ENCODE measurements at regions of chr11 and their contacts with region 1.

Region 1: DNA sequence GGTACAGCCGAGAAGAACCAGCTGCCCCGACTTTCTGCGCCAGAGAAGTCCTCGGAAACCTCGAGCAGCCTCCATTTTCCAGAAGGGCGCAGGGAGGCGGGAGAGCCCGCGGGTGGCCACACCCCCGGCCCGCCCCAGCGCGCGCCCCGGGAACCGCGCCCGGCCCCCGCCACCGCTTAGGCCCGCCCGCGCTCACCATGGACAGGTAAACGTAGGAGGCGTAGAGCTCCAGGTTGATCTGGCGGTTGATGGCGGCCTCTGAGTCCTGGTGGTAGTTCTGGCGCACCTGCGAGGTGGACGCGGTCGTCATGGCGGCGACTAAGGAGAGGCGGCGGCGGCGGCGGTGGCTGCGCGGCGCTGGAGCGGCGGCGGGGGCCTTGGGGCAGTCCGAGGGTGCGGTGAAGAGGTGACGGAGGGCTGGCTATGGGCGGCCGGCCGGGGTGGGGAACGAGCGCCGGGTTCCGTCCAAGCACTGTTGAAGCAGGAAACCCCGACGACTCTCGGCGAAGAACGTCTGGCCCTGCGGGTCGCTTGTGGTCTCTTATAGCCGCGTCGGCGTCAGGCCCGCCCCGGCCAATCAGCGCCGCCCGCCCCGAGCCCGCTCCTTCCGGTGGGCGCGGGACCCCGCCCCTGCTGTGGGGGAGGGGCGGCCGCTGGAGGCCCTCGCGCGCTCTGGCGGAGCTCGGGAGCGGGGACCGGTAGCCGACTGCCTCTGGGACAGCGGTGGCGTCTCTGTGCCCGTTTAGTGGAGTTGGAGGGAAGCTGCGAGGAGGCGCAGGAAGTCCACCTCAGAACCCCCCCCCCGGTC is at the start of gene FTH1:
- DNase-seq: peak; percentile 82 to 95 (median 91)
- ATAC-seq: peak; percentile 74
- H3K4me3 ChIP-seq: peak within 1 kb of the TSS; percentile 98 to 100
- H3K4me3 Mint-ChIP-seq: peak within 1 kb of the TSS; percentile 96
- H3K27ac ChIP-seq: peak within 1 kb of the TSS; percentile 72 to 96
- H3K27ac Mint-ChIP-seq: peak within 1 kb of the TSS; percentile 98
- H3K4me1 ChIP-seq: peaks cover 43% of the 10 kb centered on the region
- H3K4me1 Mint-ChIP-seq: peaks cover 59% of the 10 kb centered on the region
- H3K27me3 ChIP-seq: no peaks in the 10 kb centered on the region
- H3K27me3 Mint-ChIP-seq: no peaks in the 10 kb centered on the region
- CTCF ChIP-seq: no peak
- total RNA-seq, gene FTH1: 2,788 to 2,859 TPM

Region 2: DNA sequence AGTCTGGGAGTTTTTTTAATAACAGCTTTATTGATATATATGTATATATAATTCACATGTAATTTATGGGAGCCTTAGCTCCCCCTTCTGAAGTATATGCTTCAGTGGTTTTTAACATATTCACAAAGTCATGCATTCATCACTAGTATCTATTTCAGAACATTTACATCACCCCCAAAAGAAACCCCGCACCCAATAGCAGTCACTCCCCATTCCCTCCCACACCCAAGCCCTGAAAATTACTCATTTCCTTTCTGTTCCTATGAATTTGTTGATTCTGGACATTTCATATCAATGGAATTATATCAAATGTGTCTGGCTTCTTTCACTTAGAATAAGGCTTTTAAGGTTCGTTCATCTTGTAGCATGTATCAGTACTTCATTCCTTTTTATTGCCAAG is 350.9 kb before region 1 on chr11:
- CTCF ChIA-PET with region 1: no interaction called
- POLR2A ChIA-PET with region 1: no interaction called
- intact Hi-C with region 1: no loop called
- DNase-seq: no peak
- ATAC-seq: no peak
- H3K4me3 ChIP-seq: no peak overlapping the region
- H3K4me3 Mint-ChIP-seq: no peak overlapping the region
- H3K27ac ChIP-seq: no peak overlapping the region
- H3K27ac Mint-ChIP-seq: no peak overlapping the region
- H3K4me1 ChIP-seq: no peaks in the 10 kb centered on the region
- H3K4me1 Mint-ChIP-seq: no peaks in the 10 kb centered on the region
- H3K27me3 ChIP-seq: no peaks in the 10 kb centered on the region
- H3K27me3 Mint-ChIP-seq: peaks cover 35% of the 10 kb centered on the region
- CTCF ChIP-seq: no peak

Region 3: DNA sequence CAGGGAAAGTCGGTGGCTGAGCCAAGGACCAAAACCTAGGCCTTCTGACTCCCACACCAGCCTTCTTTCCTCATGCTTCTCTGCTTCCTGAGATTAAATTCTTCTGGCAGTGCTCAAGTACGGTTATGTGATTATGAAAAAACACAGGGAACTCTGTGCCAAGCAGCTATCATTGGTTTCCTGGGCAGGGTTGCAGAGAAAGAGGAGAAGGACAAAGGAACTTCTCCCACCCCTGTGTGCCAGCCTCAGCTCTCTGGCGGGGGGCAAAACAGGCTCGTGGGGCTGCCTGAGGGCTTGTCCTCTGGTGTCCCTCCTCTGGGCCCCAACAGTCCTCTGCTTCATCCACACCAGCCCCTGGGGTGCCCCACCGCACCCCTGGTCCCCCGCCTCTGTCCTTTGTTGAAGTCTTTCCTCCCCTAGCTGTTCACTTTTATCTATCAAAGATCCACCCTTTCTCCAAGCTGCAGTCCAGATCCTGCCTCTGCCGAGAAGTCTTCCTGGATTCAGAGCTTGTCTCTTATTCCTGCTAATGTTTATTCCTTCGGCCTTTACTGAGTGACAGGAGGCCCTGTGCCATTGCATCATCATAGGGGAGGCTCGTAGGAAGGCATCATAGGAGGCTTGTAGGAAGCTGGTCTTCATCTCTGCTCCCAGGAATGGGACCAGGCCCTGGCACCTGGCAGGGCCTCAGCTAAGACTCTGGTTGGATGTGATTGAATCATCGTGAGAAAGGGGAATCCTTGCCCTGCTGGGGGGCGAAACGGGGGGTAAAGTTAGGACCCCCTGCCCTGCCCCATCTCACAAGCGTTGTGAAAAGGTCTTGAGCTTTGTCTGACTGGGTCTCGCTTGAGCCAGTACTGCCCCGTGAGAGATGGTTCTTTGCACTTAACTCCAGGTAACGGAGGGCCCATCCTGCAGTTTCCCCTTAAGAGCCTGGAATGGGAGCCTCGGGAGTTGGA is 11.7 kb after region 1 on chr11:
- CTCF ChIA-PET with region 1: no interaction called
- POLR2A ChIA-PET with region 1: interaction called, 20 read pairs
- intact Hi-C with region 1: no loop called
- DNase-seq: peak in 1 of 9 experiments; percentile 42
- ATAC-seq: no peak
- H3K4me3 ChIP-seq: no peak overlapping the region
- H3K4me3 Mint-ChIP-seq: no peak overlapping the region
- H3K27ac ChIP-seq: no peak overlapping the region
- H3K27ac Mint-ChIP-seq: no peak overlapping the region
- H3K4me1 ChIP-seq: no peaks in the 10 kb centered on the region
- H3K4me1 Mint-ChIP-seq: no peaks in the 10 kb centered on the region
- H3K27me3 ChIP-seq: no peaks in the 10 kb centered on the region
- H3K27me3 Mint-ChIP-seq: no peaks in the 10 kb centered on the region
- CTCF ChIP-seq: no peak

Region 4: DNA sequence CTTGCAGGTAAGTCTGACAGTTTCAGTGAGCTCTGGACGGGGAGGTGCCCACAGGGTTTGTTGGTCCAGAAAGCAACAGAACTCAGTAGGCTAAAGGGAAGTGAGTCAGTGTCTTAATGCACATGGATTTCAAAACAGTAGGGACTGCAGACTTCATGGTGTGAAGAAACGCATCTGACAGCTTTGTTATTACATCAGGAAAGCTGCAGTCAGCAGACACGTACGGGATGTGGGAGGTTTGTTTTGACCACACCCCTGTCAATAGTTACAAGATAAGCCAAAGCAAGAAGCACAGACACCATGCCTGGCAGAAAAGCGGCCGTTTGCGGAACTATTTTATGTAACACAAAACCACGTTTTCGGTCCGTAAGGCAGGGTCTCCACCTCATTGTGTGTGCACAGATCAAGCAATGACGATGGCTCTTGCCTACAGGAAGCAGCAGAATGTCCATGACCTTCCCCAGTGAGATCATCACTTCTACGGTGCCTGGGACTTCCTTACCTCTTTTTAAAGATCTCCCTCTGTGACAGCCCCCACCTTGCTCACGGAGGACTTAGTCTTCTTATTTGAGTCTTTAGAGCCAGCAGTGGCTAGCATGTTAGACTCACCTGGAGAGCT is 58.3 kb after region 1 on chr11:
- CTCF ChIA-PET with region 1: no interaction called
- POLR2A ChIA-PET with region 1: interaction called, 35 read pairs
- intact Hi-C with region 1: loop called (anchors 1 kb)
- DNase-seq: peak; percentile 41 to 97 (median 77)
- ATAC-seq: peak; percentile 87
- H3K4me3 ChIP-seq: peak overlapping the region in 1 of 2 experiments; percentile 24
- H3K4me3 Mint-ChIP-seq: peak overlapping the region; percentile 44
- H3K27ac ChIP-seq: peak overlapping the region; percentile 78 to 91
- H3K27ac Mint-ChIP-seq: peak overlapping the region; percentile 95
- H3K4me1 ChIP-seq: peaks cover 15% of the 10 kb centered on the region
- H3K4me1 Mint-ChIP-seq: peaks cover 20% of the 10 kb centered on the region
- H3K27me3 ChIP-seq: no peaks in the 10 kb centered on the region
- H3K27me3 Mint-ChIP-seq: no peaks in the 10 kb centered on the region
- CTCF ChIP-seq: no peak

Region 5: GRCh38 chr11:62048065-62048464 is 80.7 kb after region 1 on chr11:
- CTCF ChIA-PET with region 1: no interaction called
- POLR2A ChIA-PET with region 1: no interaction called
- intact Hi-C with region 1: no loop called
- DNase-seq: no peak
- ATAC-seq: no peak
- H3K4me3 ChIP-seq: no peak overlapping the region
- H3K4me3 Mint-ChIP-seq: no peak overlapping the region
- H3K27ac ChIP-seq: no peak overlapping the region
- H3K27ac Mint-ChIP-seq: no peak overlapping the region
- H3K4me1 ChIP-seq: no peaks in the 10 kb centered on the region
- H3K4me1 Mint-ChIP-seq: no peaks in the 10 kb centered on the region
- H3K27me3 ChIP-seq: no peaks in the 10 kb centered on the region
- H3K27me3 Mint-ChIP-seq: peaks cover 4% of the 10 kb centered on the region
- CTCF ChIP-seq: no peak

Region 6: DNA sequence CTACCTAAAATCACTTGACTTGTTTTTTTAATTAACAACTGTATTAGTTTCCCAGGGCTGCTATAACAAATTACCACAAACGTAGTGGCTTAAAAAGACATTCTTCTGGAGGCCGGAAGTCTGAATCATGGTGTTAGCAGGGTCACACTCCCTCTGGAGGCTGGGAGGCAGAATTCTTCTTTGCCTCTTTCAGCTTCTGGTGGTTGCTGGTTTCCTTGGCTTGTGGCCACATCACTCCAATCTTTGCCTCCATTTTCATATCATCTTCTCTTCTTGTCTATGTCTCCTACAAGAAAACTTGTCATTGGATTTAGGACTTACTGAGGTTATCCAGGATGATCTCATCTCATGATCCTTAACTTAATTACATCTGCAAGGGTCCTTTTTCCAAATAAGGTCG is 149.1 kb after region 1 on chr11:
- CTCF ChIA-PET with region 1: no interaction called
- POLR2A ChIA-PET with region 1: no interaction called
- intact Hi-C with region 1: no loop called
- DNase-seq: no peak
- ATAC-seq: no peak
- H3K4me3 ChIP-seq: no peak overlapping the region
- H3K4me3 Mint-ChIP-seq: no peak overlapping the region
- H3K27ac ChIP-seq: no peak overlapping the region
- H3K27ac Mint-ChIP-seq: no peak overlapping the region
- H3K4me1 ChIP-seq: peaks cover 6% of the 10 kb centered on the region
- H3K4me1 Mint-ChIP-seq: peaks cover 2% of the 10 kb centered on the region
- H3K27me3 ChIP-seq: no peaks in the 10 kb centered on the region
- H3K27me3 Mint-ChIP-seq: no peaks in the 10 kb centered on the region
- CTCF ChIP-seq: no peak

Measured in CD8-positive, alpha-beta T cell (primary cell).